ENCODE measurements at regions of chr11 and their contacts with region 1.

Region 1: DNA sequence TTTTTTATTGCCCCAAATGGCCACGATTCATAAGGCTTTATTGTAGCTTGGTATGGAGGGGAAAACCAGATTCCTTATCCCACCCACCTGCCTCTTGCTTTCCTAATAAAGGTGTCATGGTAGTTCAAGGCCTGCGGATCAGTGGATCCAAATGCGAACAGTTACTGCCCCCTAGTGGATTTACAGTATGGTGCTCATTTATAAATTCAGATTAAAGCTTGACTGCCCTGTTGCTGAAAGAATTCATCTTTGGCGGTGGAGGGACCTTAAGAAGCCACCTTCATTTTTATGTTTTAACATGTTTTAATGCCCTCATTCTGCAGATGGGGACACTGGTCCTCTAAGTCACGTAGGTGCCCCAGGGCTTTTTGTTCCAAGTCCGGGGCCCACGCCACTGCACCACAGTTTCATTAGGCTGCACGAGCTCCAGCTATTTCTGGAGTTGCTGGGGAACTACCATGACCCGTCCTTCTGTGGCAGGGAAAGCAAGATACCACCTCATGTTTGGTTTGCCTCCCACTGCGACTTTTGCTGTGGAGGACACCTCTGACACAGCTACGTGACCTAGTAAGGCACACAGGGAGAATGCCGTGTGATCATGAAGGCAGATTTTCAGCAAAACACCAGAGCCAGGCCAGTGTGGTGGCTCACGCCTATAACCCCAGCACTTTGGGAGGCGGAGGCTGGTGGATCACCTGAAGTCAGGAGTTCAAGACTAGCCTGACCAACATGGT is 15.6 kb upstream of the INCENP start:
- DNase-seq: peak; percentile 69
- H3K4me3 ChIP-seq: no peak overlapping the region; a peak in 1 of 4 replicates
- H3K27ac ChIP-seq: no peak overlapping the region
- H3K4me1 ChIP-seq: peaks cover 0 to 3% of the 10 kb centered on the region in 2 experiments; a peak in 1 of 4 replicates
- H3K27me3 ChIP-seq: no peaks in the 10 kb centered on the region
- CTCF ChIP-seq: peak; percentile 87
- EP300 ChIP-seq: no peak
- RAD21 ChIP-seq: peak; percentile 92

Region 2: DNA sequence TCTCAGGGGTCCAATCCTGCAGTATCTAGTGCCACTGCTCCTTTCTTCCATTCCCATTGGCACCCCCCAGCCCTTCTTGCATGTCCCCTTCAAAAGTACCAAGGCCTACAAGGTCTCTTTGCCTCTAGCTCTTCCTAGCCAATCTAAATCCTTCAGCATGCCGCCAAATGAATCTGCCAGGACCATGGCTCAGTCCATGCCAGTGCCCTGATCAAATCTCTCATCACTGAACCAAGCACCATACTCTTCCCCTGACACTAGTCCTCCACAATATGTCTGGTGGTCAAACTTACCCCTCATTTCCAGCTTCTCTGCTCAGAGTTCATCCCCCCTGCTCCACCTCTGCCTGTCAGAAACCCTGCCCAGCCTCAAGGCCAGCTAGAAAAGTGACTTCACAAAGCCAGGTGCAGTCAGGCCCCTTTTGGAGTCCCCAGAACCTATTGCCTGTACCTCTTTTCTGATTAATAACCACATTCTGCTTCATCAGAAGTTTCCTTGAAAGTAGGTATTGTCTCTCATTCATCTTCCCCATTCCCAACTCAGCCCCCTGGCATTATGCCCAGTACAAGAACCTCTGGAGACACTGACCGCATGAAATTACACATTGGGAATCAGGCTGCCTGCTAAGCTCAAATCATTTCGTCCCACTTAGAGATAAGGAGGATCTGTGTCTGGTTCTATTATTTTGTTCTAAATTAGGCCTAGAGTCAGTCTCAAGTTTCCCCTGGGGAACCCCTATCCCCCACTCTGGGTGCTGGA is 304.1 kb before region 1 on chr11:
- CTCF ChIA-PET with region 1: interaction called, 92 read pairs
- POLR2A ChIA-PET with region 1: no interaction called
- DNase-seq: no peak
- H3K4me3 ChIP-seq: no peak overlapping the region
- H3K27ac ChIP-seq: no peak overlapping the region
- H3K4me1 ChIP-seq: no peaks in the 10 kb centered on the region
- H3K27me3 ChIP-seq: no peaks in the 10 kb centered on the region
- CTCF ChIP-seq: no peak
- EP300 ChIP-seq: no peak
- RAD21 ChIP-seq: no peak

Region 3: DNA sequence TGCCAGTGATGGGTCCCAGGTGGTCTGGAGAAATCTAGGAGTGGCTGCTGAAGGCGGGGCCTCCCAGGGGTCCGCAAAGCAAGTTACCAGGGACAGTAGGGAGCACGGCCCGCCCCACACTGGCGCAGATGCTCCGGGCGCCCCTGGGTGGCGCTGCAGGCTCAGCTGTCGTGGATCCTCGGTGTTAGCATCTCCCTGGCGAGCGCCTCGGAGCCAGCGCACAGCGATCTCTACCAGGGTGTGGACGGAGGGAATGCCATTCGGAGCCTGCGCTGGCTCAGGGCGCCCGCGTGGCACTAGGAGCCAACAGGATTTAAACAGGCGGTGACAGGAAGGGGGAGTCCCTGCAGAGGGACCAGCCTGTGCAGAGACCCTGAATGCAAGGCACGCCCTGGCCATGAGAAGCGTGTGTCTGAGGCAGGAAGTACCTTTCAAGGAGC is 237.0 kb before region 1 on chr11:
- CTCF ChIA-PET with region 1: interaction called, 71 read pairs
- POLR2A ChIA-PET with region 1: interaction called, 3 read pairs
- DNase-seq: peak; percentile 94
- H3K4me3 ChIP-seq: peak overlapping the region; percentile 12 to 17; a peak in 2 of 4 replicates
- H3K27ac ChIP-seq: no peak overlapping the region
- H3K4me1 ChIP-seq: peaks cover 0 to 13% of the 10 kb centered on the region in 2 experiments; a peak in 2 of 4 replicates
- H3K27me3 ChIP-seq: no peaks in the 10 kb centered on the region
- CTCF ChIP-seq: peak; percentile 89
- EP300 ChIP-seq: no peak
- RAD21 ChIP-seq: peak; percentile 88

Region 4: DNA sequence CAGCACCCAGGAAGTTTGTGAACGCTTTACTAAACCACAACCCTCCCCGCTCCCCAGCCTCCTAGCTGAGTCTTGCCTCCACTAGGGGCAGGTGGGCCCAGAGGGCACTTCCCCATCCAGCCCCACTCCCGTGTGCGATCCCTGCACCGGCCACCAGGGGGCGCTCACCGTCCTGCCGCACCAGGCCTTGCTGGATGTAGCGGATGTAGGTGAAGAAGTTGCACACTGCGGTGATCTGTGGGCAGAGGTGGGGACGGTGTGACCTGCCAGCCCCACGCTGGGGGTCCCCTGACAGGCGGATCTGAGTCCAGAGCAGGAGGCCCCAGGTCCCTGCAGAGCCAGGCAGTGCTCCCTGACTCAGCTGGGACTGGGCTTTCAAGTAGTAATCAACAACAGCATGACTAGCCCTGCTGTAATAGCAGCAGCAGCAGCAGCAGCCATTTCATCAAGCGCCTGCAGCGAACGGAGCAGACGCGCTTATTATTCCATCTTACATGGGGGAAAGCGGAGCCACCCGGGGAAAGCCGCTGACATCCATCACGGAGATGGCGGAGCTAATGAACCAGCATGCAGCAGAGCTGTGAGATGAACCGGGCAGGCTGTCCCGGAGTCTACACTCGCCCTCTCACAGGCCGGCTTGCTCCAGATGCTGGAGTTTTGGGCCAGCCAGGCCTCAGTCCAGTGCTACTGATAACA is 208.9 kb before region 1 on chr11:
- CTCF ChIA-PET with region 1: interaction called, 147 read pairs
- POLR2A ChIA-PET with region 1: interaction called, 3 read pairs
- DNase-seq: peak; percentile 97
- H3K4me3 ChIP-seq: peak overlapping the region in 1 of 2 experiments; percentile 44; a peak in 1 of 4 replicates
- H3K27ac ChIP-seq: no peak overlapping the region
- H3K4me1 ChIP-seq: no peaks in the 10 kb centered on the region
- H3K27me3 ChIP-seq: no peaks in the 10 kb centered on the region
- CTCF ChIP-seq: peak; percentile 98
- EP300 ChIP-seq: no peak
- RAD21 ChIP-seq: peak; percentile 89

Region 5: DNA sequence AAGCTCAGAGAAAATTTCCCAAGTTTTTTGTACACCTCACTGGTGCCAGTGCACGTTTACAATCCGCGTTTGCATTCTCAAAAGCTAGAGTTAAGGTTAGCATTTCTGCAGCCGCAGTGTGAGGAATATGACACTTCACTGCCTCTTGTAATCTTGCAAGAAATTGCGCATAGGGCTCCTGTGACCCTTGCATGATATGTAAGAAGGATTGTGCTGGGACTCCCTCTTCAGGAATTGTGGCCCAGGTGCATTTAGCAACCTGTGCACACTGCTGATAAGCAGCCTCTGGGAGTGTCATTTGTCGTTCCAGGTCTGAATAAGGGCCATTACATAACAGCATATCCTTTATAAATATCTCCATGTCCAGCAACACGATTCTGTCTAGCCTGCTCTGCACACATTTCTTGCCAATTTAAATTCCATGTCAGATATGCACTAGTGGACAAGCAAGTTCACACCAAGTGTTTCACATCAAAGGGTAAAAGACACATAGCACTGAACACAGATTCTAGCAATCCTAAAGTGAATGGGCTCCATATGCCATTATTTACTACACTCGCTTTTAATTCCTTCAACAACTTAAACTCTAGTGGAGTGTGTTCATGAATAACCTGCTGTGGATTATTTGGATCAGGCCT is 53.6 kb before region 1 on chr11:
- CTCF ChIA-PET with region 1: interaction called, 16 read pairs
- POLR2A ChIA-PET with region 1: no interaction called
- DNase-seq: no peak
- H3K4me3 ChIP-seq: no peak overlapping the region
- H3K27ac ChIP-seq: no peak overlapping the region
- H3K4me1 ChIP-seq: no peaks in the 10 kb centered on the region
- H3K27me3 ChIP-seq: no peaks in the 10 kb centered on the region
- CTCF ChIP-seq: peak; percentile 27; the same call in 1 of the 2 replicates
- EP300 ChIP-seq: no peak
- RAD21 ChIP-seq: peak; percentile 48

Region 6: GRCh38 chr11:62123669-62124185 is 15.5 kb after region 1 on chr11 and contains the start of gene INCENP:
- CTCF ChIA-PET with region 1: interaction called, 21 read pairs
- POLR2A ChIA-PET with region 1: interaction called, 9 read pairs
- DNase-seq: peak; percentile 96
- H3K4me3 ChIP-seq: peak within 1 kb of the TSS; percentile 89
- H3K27ac ChIP-seq: peak within 1 kb of the TSS; percentile 58 to 77
- H3K4me1 ChIP-seq: peaks cover 8 to 13% of the 10 kb centered on the region in 2 experiments; a peak in 2 of 4 replicates
- H3K27me3 ChIP-seq: no peaks in the 10 kb centered on the region
- CTCF ChIP-seq: no peak
- EP300 ChIP-seq: no peak
- RAD21 ChIP-seq: no peak
- polyA plus RNA-seq, gene INCENP: 14.5 and 20.1 TPM in 2 replicates

Region 7: GRCh38 chr11:62223095-62223494 is 114.9 kb after region 1 on chr11:
- CTCF ChIA-PET with region 1: no interaction called
- POLR2A ChIA-PET with region 1: no interaction called
- DNase-seq: no peak
- H3K4me3 ChIP-seq: no peak overlapping the region
- H3K27ac ChIP-seq: no peak overlapping the region
- H3K4me1 ChIP-seq: no peaks in the 10 kb centered on the region
- H3K27me3 ChIP-seq: no peaks in the 10 kb centered on the region
- CTCF ChIP-seq: no peak
- EP300 ChIP-seq: no peak
- RAD21 ChIP-seq: no peak